Transverse colon (tissue), 4 donors: ENCODE measurements at regions of chr17 and their contacts with region 1.

Region 1: GRCh38 chr17:72556944-72557826 is 436.4 kb downstream of the SOX9 start:
- DNase-seq: peak; percentile 75
- H3K4me3 ChIP-seq: no peak overlapping the region
- H3K27ac ChIP-seq: no peak overlapping the region
- H3K4me1 ChIP-seq: peaks cover 0 to 17% (median 8%) of the 10 kb centered on the region in 4 donors
- H3K27me3 ChIP-seq: no peaks in the 10 kb centered on the region
- CTCF ChIP-seq: peak; percentile 68 to 82 (median 71)
- EP300 ChIP-seq: no peak
- POLR2A ChIP-seq: no peak

Region 2: GRCh38 chr17:72618001-72618509 is 60.9 kb after region 1 on chr17:
- in situ Hi-C with region 1: loop called in 1 of 4 experiments (anchors 10 kb)
- intact Hi-C with region 1: no loop called
- DNase-seq: peak; percentile 94
- H3K4me3 ChIP-seq: peak overlapping the region in 1 of 4 donors; percentile 5
- H3K27ac ChIP-seq: peak overlapping the region; percentile 77 to 84 (median 84)
- H3K4me1 ChIP-seq: peaks cover 8 to 57% (median 38%) of the 10 kb centered on the region in 4 donors
- H3K27me3 ChIP-seq: no peaks in the 10 kb centered on the region
- CTCF ChIP-seq: no peak
- EP300 ChIP-seq: no peak
- POLR2A ChIP-seq: peak; percentile 87

Region 3: GRCh38 chr17:72771736-72772135 is 214.6 kb after region 1 on chr17:
- in situ Hi-C with region 1: no loop called
- intact Hi-C with region 1: no loop called
- DNase-seq: no peak
- H3K4me3 ChIP-seq: no peak overlapping the region
- H3K27ac ChIP-seq: no peak overlapping the region
- H3K4me1 ChIP-seq: no peaks in the 10 kb centered on the region
- H3K27me3 ChIP-seq: no peaks in the 10 kb centered on the region
- CTCF ChIP-seq: no peak
- EP300 ChIP-seq: no peak
- POLR2A ChIP-seq: no peak

Region 4: GRCh38 chr17:72863526-72864211 is 306.5 kb after region 1 on chr17:
- in situ Hi-C with region 1: no loop called
- intact Hi-C with region 1: no loop called
- DNase-seq: no peak
- H3K4me3 ChIP-seq: no peak overlapping the region
- H3K27ac ChIP-seq: no peak overlapping the region
- H3K4me1 ChIP-seq: no peaks in the 10 kb centered on the region
- H3K27me3 ChIP-seq: no peaks in the 10 kb centered on the region
- CTCF ChIP-seq: no peak
- EP300 ChIP-seq: no peak
- POLR2A ChIP-seq: no peak

Region 5: DNA sequence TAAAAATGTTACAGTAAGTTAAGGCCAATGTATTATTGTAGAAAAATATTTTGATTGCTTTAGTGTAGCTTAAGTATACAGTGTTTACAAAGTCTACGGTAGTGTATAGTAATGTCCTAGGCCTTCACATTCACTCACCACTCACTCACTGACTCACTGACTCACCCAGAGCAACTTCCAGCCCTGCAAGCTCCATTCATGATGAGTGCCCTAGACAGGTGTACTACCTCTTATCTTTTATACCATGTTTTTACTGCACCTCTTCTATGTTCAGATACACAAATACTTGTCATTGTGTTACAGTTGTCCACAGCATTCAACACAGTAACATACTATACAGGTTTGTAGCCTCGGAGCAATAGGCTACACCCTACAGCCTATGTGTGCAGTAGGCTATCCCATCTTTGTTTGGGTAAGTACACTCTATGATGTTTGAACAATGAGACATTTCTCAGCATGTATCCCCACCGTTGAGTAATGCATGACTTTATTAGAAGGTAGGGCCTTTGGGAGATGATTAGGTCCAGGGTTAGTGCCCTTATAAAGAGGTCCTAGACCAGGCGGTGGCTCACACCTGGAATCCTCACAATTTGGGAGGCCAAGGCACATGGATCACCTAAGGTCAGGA is 417.5 kb after region 1 on chr17:
- in situ Hi-C with region 1: loop called in 2 of 4 experiments (anchors 25 kb)
- intact Hi-C with region 1: no loop called
- DNase-seq: peak; percentile 43
- H3K4me3 ChIP-seq: no peak overlapping the region
- H3K27ac ChIP-seq: no peak overlapping the region
- H3K4me1 ChIP-seq: peaks cover 0 to 22% (median 13%) of the 10 kb centered on the region in 4 donors
- H3K27me3 ChIP-seq: peaks cover 6% of the 10 kb centered on the region
- CTCF ChIP-seq: no peak
- EP300 ChIP-seq: no peak
- POLR2A ChIP-seq: no peak

Region 6: GRCh38 chr17:73156166-73156840 is 599.1 kb after region 1 on chr17:
- in situ Hi-C with region 1: loop called in 1 of 4 experiments (anchors 25 kb)
- intact Hi-C with region 1: no loop called
- DNase-seq: peak; percentile 67
- H3K4me3 ChIP-seq: no peak overlapping the region
- H3K27ac ChIP-seq: no peak overlapping the region
- H3K4me1 ChIP-seq: peaks cover 0 to 18% (median 3%) of the 10 kb centered on the region in 4 donors
- H3K27me3 ChIP-seq: peaks cover 45% of the 10 kb centered on the region
- CTCF ChIP-seq: peak; percentile 69 to 84 (median 75)
- EP300 ChIP-seq: no peak
- POLR2A ChIP-seq: no peak

Region 7: DNA sequence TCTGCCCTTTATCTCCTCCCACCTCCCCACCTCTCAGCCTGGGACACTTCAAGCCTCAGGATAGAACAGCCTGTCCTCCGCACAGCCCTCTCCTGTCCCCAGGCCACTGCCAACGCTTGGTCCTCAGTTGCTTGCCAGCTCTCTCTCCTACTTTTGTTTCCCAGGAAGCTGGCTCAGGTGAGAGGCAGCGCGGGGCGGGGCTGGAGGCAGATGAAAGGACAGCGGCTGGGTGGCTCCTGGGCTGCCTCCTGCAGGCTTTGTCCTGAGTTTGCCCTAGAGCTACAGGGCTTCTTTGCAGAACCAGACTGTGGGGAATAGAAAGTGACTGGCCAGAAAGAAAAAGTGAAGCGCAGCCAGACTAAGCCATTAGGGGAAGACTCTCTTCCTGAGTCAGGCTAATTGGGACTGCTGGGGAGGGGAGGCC is 802.8 kb after region 1 on chr17:
- in situ Hi-C with region 1: loop called in 2 of 4 experiments (anchors 25 kb)
- intact Hi-C with region 1: no loop called
- DNase-seq: peak; percentile 77
- H3K4me3 ChIP-seq: no peak overlapping the region
- H3K27ac ChIP-seq: no peak overlapping the region
- H3K4me1 ChIP-seq: peaks cover 0 to 20% (median 2%) of the 10 kb centered on the region in 4 donors
- H3K27me3 ChIP-seq: no peaks in the 10 kb centered on the region
- CTCF ChIP-seq: peak in 2 of 5 experiments; percentile 27 to 39
- EP300 ChIP-seq: no peak
- POLR2A ChIP-seq: no peak